ENCODE measurements at regions of chr1 and their contacts with region 1.

Region 1: DNA sequence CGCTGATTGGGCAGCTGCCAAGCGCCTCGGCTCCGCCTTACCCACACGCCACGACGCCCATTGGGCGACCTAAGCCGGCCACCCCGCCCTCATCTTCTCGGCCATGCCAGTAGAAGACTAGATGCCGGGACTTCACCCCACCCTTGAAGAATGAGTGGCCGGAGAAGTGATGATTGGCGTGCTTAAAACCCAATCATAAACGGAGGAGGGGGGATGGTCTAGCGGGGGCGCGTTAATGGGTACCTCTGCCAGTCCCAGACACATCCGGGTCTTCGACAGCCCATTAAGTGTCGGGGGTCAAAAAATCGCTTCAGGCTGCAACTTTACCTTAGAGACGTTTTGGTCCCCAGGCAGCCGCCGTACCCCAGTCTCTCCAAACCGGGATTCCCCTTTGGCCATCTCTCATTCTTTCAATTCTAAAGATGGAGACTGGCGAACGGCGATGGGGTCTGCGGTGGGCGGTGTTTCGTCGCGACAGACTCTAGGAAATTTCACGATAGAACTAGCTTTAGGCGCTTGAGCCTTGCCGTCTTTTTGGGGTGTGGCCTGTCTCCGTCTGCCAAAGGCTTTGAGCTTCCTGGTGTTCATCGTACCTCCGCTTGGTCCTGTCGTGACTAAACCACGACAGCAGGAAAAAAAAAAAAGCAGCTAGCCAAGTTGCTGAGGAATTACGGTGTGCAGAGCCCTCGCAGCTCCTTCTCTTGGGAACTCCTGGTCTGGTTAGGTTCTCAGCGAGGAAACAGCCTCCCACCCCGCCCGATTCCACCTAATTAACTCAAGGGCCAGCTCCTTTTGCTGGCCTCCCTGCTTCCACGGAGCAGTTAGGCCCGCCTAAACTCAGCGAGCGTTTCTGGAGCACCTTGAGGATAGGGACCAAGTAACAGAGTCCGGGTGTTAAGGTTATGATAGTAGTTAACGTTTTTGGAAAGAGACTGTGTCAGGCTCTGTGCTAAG is at the start of gene GATAD2B:
- DNase-seq: peak; percentile 99 to 100
- ATAC-seq: peak; percentile 95 to 98 (median 96)
- H3K4me3 ChIP-seq: peak within 1 kb of the TSS; percentile 72
- H3K27ac ChIP-seq: peak within 1 kb of the TSS; percentile 92
- H3K4me1 ChIP-seq: peaks cover 29% of the 10 kb centered on the region
- H3K27me3 ChIP-seq: no peaks in the 10 kb centered on the region
- CTCF ChIP-seq: no peak
- total RNA-seq, gene GATAD2B: 34.8 to 53.1 (median 43.1) TPM

Region 2: GRCh38 chr1:153763365-153764225 is 159.7 kb before region 1 on chr1:
- intact Hi-C with region 1: no loop called
- DNase-seq: no peak
- ATAC-seq: peak in 2 of 4 donors; percentile 40 to 48
- H3K4me3 ChIP-seq: no peak overlapping the region
- H3K27ac ChIP-seq: peak overlapping the region; percentile 55
- H3K4me1 ChIP-seq: no peaks in the 10 kb centered on the region
- H3K27me3 ChIP-seq: no peaks in the 10 kb centered on the region
- CTCF ChIP-seq: no peak

Region 3: DNA sequence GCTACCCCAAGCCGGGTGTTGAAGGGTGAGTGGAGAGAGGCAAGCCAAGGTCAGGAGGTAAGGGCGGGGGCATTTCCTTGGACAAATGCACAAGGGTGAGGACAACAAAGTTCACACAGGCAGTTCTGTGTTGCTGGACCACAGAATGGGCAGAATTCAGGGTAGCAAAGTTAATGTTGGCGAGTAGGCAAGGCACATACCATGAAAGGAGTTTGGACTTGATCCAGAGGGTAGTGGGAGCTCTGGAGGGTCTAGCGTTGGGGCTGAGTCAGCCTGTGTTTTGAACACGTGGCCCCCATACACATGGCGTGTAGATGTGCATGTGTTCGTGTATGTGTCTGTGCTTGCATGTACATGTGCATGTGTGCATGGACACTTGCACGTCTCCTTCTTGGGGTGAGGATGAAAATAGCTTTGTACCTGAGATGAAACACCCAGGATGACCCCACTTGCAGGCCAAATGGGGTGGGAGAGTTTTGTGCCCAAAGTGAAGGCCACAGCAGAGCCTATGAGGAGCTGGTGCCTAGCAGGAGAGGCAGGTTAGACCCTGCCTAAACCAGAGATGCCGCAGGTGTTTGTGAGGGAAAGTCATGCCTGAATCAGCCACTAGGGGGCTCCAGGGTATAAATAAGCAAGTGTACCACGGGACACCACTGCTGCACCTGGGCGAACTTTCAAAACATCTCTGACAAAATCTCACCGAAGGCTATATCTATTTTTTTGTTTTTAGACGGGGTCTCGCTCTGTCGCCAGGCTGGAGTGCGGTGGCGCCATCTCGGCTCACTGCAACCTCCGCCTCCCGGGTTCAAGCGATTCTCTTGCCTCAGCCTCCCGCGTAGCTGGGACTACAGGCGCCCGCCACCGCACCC is 126.2 kb before region 1 on chr1:
- intact Hi-C with region 1: loop called in 1 of 2 experiments (anchors 5 kb)
- DNase-seq: peak; percentile 73 to 80
- ATAC-seq: peak; percentile 74 to 85 (median 82)
- H3K4me3 ChIP-seq: no peak overlapping the region
- H3K27ac ChIP-seq: no peak overlapping the region
- H3K4me1 ChIP-seq: no peaks in the 10 kb centered on the region
- H3K27me3 ChIP-seq: no peaks in the 10 kb centered on the region
- CTCF ChIP-seq: peak; percentile 90

Region 4: DNA sequence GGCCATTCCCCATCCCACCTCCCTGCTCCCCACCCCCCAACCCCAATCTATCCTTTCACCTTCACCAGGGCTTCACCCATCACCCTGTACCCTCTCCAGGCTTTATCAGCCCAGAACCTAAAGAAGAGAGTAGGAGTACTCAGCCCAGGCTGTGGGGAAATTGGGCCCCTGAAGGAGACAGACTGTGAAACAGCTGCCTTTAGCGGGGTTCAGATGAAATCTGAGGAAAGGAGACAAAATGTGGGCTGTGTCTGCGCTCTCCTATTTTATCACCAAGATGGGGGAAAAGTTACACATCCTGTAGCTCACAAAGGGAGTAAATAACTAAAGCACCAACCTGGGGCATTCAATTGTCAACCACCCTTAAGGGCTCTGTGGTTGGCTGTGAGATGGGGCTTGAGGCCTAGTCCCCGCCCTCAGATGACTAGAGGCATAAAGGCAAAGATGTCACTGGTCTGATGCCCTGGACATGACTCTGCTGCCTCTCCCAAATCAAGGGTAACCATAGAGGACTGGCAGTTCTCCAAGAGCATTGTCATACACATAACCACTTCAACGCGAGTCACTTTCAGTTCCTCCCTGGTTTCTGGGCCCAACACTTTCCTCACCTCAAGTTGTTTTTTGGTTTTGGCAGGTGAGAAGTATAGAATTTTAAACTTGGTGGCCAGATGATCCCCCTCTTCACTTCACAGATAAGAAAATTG is 118.1 kb before region 1 on chr1:
- intact Hi-C with region 1: loop called in 1 of 2 experiments (anchors 5 kb)
- DNase-seq: peak; percentile 34 to 71
- ATAC-seq: peak; percentile 62 to 88 (median 82)
- H3K4me3 ChIP-seq: no peak overlapping the region
- H3K27ac ChIP-seq: no peak overlapping the region
- H3K4me1 ChIP-seq: peaks cover 5% of the 10 kb centered on the region
- H3K27me3 ChIP-seq: no peaks in the 10 kb centered on the region
- CTCF ChIP-seq: no peak

Region 5: GRCh38 chr1:153816283-153816889 is 106.9 kb before region 1 on chr1:
- intact Hi-C with region 1: loop called (anchors 1 to 5 kb)
- DNase-seq: peak in 1 of 2 donors; percentile 39
- ATAC-seq: peak; percentile 55 to 76 (median 74)
- H3K4me3 ChIP-seq: no peak overlapping the region
- H3K27ac ChIP-seq: peak overlapping the region; percentile 65
- H3K4me1 ChIP-seq: no peaks in the 10 kb centered on the region
- H3K27me3 ChIP-seq: no peaks in the 10 kb centered on the region
- CTCF ChIP-seq: no peak

Region 6: GRCh38 chr1:153880962-153881361 is 42.3 kb before region 1 on chr1:
- intact Hi-C with region 1: loop called in 1 of 2 experiments (anchors 5 kb)
- DNase-seq: peak; percentile 81 to 89
- ATAC-seq: peak; percentile 78 to 91 (median 88)
- H3K4me3 ChIP-seq: no peak overlapping the region
- H3K27ac ChIP-seq: no peak overlapping the region
- H3K4me1 ChIP-seq: peaks cover 42% of the 10 kb centered on the region
- H3K27me3 ChIP-seq: no peaks in the 10 kb centered on the region
- CTCF ChIP-seq: no peak

Region 7: DNA sequence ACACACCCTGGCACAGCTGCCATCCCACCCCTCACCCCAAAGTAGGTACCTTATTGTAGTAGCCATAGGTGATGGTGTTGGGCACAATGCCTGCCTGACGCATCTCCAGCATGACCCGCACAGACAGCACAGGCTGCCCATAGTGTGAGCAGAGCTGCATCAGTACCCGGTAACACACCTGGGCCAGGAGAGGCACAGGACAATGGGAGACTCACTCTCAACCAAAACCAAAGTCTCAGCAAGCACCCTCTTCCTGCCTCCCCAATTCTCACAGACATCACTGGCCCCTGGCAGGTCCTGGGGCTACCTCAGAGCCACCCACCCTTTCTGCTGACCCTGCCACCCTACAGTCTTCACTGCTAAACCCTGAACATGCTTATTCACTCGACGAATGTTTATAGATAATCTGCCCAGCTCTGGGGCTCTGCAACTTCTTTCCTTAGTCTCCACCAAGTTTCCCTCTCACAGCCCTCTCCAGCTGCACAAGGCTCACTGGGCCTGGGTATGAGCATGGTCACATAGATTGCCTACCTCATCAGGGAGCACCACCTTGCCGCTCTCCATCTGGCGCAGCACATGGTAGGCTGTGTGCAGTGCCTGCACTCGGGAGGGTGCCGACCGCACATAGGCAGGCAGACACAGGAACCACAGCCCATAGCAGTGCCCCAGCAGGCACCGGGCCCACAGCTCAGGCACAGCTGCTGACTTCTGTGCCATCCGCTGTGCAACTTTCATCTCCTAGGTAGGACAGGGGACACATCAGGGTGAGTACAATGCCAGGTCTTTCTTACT is 13.0 kb after region 1 on chr1:
- intact Hi-C with region 1: no loop called
- DNase-seq: no peak
- ATAC-seq: no peak
- H3K4me3 ChIP-seq: no peak overlapping the region
- H3K27ac ChIP-seq: no peak overlapping the region
- H3K4me1 ChIP-seq: no peaks in the 10 kb centered on the region
- H3K27me3 ChIP-seq: no peaks in the 10 kb centered on the region
- CTCF ChIP-seq: no peak

Region 8: GRCh38 chr1:153946622-153947241 is 23.5 kb after region 1 on chr1 and contains the start of gene DENND4B:
- intact Hi-C with region 1: loop called in 1 of 2 experiments (anchors 2 kb)
- DNase-seq: peak; percentile 88 to 93
- ATAC-seq: peak; percentile 84 to 85 (median 84)
- H3K4me3 ChIP-seq: peak within 1 kb of the TSS; percentile 99
- H3K27ac ChIP-seq: peak within 1 kb of the TSS; percentile 94
- H3K4me1 ChIP-seq: peaks cover 24% of the 10 kb centered on the region
- H3K27me3 ChIP-seq: no peaks in the 10 kb centered on the region
- CTCF ChIP-seq: peak; percentile 93
- total RNA-seq, gene DENND4B: 47.1 to 75.4 (median 50.3) TPM

Region 9: GRCh38 chr1:153977250-153978240 is 54.3 kb after region 1 on chr1 and contains the start of gene JTB:
- intact Hi-C with region 1: no loop called
- DNase-seq: peak; percentile 89 to 94
- ATAC-seq: peak; percentile 94 to 98 (median 96)
- H3K4me3 ChIP-seq: peak within 1 kb of the TSS; percentile 83
- H3K27ac ChIP-seq: peak within 1 kb of the TSS; percentile 94
- H3K4me1 ChIP-seq: peaks cover 20% of the 10 kb centered on the region
- H3K27me3 ChIP-seq: no peaks in the 10 kb centered on the region
- CTCF ChIP-seq: no peak
- total RNA-seq, gene JTB: 87.6 to 118 (median 95.0) TPM